Panc1 (cell line): ENCODE measurements at regions of chr3 and their contacts with region 1.

Region 1: DNA sequence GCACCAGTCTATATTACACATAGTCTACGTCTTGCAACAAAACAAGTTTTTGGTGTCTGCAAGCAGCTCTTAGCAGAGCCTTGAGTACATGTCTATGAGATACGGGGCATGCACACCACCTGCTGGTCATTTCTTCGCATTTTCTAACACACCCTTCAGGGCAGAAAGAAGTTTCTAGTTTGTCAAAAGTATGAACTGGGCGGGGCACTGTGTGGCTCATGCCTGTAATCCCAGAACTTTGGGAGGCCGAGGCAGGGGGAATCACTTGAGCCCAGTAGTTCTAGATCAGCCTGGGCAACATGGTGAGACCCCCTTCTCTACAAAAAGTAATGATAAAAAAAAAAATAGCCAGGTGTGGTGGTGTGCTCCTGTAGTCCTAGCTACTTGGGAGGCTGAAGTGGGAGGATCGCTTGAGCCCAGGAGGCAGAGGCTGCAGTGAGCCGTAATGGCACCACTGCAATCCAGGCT is 64.2 kb upstream of the ARL8B start:
- DNase-seq: peak; percentile 75
- ATAC-seq: peak; percentile 97
- H3K4me3 ChIP-seq: no peak overlapping the region
- H3K27ac ChIP-seq: no peak overlapping the region
- H3K4me1 ChIP-seq: peaks cover 4% of the 10 kb centered on the region; the same call in 1 of the 2 replicates
- H3K27me3 ChIP-seq: no peaks in the 10 kb centered on the region
- CTCF ChIP-seq: peak; percentile 76

Region 2: DNA sequence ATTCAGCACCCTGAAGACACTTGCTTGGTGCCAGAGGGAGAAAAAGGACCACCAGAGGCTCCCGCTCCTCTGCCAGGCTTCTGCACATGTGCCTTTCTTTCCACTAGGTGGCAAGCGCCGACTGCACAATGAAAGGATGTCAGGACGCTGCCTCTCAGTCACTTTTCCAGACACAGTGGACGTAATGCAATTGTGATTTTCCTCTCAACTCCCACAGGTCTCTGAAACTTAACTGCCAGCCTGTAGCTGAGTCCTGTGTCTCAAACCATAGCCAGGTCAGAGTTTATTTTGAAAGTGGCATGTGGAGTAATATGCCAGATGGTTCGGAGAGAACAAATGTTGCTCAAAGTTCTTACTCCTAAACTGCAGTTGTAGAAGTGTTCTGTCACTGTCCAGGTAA is 401.8 kb before region 1 on chr3:
- CTCF ChIA-PET with region 1: interaction called, 3 read pairs
- POLR2A ChIA-PET with region 1: no interaction called
- in situ Hi-C with region 1: no loop called
- intact Hi-C with region 1: loop called (anchors 1 kb)
- DNase-seq: no peak
- ATAC-seq: peak; percentile 99
- H3K4me3 ChIP-seq: no peak overlapping the region
- H3K27ac ChIP-seq: no peak overlapping the region
- H3K4me1 ChIP-seq: peaks cover 6% of the 10 kb centered on the region; the same call in 1 of the 2 replicates
- H3K27me3 ChIP-seq: no peaks in the 10 kb centered on the region
- CTCF ChIP-seq: peak; percentile 88

Region 3: GRCh38 chr3:4712143-4712542 is 345.7 kb before region 1 on chr3:
- CTCF ChIA-PET with region 1: interaction called, 10 read pairs
- POLR2A ChIA-PET with region 1: no interaction called
- in situ Hi-C with region 1: no loop called
- intact Hi-C with region 1: loop called (anchors 1 kb)
- DNase-seq: no peak
- ATAC-seq: no peak
- H3K4me3 ChIP-seq: no peak overlapping the region
- H3K27ac ChIP-seq: peak overlapping the region; percentile 23; the same call in 1 of the 2 replicates
- H3K4me1 ChIP-seq: peaks cover 5% of the 10 kb centered on the region
- H3K27me3 ChIP-seq: no peaks in the 10 kb centered on the region
- CTCF ChIP-seq: no peak